HEK293 (cell line): ENCODE measurements at regions of chr1 and their contacts with region 1.

Region 1: DNA sequence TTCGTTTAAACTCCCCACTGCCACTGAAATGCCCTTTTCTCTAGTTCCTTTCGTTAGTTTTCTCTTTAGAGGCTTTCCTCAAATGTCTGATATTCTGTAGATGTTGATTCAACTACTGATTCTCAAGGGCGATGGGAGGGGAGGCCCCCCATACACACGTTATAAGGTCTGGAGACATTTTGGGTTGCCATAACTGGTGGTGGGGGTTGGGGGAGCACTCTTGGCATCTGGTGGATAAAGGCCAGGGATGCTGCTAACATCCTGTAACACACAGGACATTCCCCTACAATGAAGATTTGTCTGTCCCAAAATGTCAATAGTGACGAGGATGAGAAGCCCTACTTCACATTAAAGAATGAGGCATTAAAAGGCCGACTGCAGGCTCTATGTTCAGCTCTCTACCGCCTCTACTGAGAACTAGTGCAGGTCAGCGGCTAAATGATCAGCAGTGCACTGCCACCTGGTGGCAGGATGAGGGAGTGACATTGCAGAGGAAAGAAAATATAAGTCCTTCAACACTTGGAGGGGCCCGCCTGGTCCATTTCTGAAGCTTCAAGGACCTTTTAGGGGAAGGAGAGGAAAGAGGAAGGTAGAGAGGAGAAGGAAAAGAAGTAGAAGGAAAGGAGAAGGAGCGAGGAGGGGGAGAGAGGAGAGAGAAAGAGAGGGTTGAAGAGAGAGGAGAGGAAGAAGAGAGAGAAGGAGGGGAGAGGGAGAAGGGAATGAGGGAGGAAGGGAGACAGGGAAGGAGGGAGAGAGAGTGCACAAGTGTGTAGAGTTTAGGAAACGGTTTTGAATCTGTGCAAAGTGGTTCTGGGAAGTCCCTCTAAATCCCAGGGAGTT is 29.4 kb downstream of the ALG14 start:
- H3K4me3 ChIP-seq: no peak overlapping the region
- H3K27ac ChIP-seq: no peak overlapping the region
- H3K4me1 ChIP-seq: no peaks in the 10 kb centered on the region
- CTCF ChIP-seq: peak; percentile 99

Region 2: DNA sequence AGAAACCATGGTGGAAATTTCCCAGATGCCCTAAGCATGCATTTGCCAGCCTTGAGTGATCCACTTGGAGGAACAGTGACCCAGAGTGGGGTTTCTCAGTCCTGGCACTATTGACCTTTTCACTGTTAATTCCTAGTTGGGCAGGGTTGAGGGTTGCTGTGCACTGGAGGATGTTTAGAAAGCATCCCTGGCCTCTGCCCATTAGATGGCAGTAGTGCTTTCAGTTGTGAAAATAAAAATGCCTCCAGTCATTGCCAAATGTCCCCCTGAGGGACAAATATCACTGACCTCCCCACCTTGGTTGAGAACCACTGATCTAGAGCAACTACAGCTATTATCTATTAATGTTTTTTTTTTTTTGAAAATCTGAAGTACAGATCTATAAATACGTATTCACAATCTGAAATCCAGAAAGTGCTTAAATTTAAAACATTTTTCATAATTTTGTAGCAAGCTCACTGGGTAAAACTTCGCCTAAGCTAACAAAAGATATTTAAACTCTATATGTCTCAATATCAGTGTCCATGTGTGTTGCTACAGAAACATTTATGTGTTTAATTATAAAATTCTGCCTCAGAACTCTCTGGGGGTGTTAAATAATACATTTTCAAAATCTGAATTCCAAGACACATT is 529.1 kb before region 1 on chr1:
- CTCF ChIA-PET with region 1: interaction called, 11 read pairs
- POLR2A ChIA-PET with region 1: no interaction called
- H3K4me3 ChIP-seq: no peak overlapping the region
- H3K27ac ChIP-seq: no peak overlapping the region
- H3K4me1 ChIP-seq: no peaks in the 10 kb centered on the region
- CTCF ChIP-seq: no peak

Region 3: DNA sequence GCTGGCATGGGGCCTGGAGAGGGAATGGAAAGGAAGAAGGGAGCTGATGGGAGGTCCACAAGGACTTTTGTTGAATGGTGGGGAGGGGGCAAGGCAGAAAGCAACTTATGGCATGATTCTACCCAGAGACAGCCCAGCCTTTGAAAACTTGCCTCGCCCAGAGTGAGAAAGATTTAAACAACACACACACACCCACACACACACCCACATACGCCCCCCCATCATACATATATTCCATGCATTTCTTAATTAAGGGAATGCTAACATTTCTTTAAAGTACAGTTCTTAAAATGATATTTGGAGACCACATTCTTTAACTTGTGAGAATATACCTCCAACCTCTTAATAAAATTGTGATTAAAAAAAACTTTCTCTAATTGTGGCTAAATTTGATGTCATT is 386.4 kb before region 1 on chr1:
- CTCF ChIA-PET with region 1: no interaction called
- POLR2A ChIA-PET with region 1: no interaction called
- H3K4me3 ChIP-seq: no peak overlapping the region
- H3K27ac ChIP-seq: no peak overlapping the region
- H3K4me1 ChIP-seq: peaks cover 20% of the 10 kb centered on the region
- CTCF ChIP-seq: no peak

Region 4: GRCh38 chr1:94817712-94818111 is 225.6 kb before region 1 on chr1:
- CTCF ChIA-PET with region 1: interaction called, 16 read pairs
- POLR2A ChIA-PET with region 1: no interaction called
- H3K4me3 ChIP-seq: no peak overlapping the region
- H3K27ac ChIP-seq: no peak overlapping the region
- H3K4me1 ChIP-seq: no peaks in the 10 kb centered on the region; the same call in 1 of the 2 replicates
- CTCF ChIP-seq: no peak

Region 5: GRCh38 chr1:94863919-94864318 is 179.4 kb before region 1 on chr1:
- CTCF ChIA-PET with region 1: interaction called, 17 read pairs
- POLR2A ChIA-PET with region 1: no interaction called
- H3K4me3 ChIP-seq: no peak overlapping the region
- H3K27ac ChIP-seq: no peak overlapping the region
- H3K4me1 ChIP-seq: peaks cover 12% of the 10 kb centered on the region
- CTCF ChIP-seq: no peak

Region 6: DNA sequence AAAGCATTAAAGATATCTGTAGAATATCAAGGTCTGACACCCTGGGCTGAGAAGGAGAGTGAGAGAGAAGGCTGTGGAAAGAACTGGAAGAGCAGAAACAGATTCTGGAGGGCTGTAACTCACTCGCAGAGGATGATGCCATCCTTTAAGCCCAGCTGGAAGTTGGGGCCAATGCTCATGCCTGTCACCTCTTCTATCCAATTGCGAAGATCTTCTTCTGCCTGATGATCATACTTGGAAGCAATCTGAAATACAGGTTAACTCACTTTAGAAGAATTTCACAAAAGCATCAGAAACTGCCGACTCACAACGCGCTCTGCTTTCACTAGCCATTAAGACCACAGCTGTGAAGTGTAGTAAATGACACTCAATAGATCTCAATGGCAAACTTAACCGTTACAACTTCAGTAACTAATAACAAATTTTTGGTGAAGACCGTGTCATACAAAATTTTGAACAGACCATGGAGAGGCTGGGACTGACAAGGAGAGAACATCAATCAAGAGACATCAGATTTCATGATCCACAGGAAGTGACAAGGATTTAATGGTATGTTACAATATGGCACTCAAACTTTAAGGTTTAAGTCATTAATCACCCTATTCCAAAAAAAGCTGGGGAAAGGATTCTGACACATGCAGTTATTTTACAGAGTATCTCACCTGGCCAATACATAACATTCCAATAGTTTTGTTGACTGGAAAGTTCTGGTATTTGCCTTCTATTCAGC is 139.9 kb before region 1 on chr1:
- CTCF ChIA-PET with region 1: interaction called, 11 read pairs
- POLR2A ChIA-PET with region 1: no interaction called
- H3K4me3 ChIP-seq: no peak overlapping the region
- H3K27ac ChIP-seq: no peak overlapping the region
- H3K4me1 ChIP-seq: peaks cover 4% of the 10 kb centered on the region; the same call in 1 of the 2 replicates
- CTCF ChIP-seq: no peak

Region 7: DNA sequence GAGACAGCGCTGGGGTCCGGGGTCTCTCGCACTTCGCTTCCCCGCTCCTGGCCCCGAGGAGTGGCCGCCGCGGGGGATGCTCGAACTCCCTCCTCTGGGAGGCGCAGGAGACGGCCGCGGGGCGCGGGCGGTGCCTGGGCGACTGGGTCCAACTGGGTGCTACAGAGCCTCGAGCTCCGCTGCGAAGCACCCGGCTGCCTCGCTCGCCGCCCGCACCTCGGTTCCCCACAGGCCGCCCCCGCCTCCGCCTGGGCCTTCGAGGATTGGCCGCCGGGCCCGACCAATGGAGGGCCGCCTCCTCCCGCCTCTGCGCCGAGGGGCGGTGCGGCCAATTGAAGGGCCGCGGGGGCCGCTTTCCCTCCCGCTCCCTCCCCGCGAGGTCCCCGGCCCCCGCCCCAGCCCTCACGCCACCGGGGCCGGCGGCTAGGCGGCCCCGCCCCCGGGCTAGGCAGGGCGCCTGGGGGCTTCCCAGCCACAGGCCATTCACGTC is 116.4 kb before region 1 on chr1 and contains the start of gene CNN3:
- CTCF ChIA-PET with region 1: interaction called, 15 read pairs
- POLR2A ChIA-PET with region 1: interaction called, 4 read pairs
- H3K4me3 ChIP-seq: peak within 1 kb of the TSS; percentile 82
- H3K27ac ChIP-seq: peak within 1 kb of the TSS; percentile 97
- H3K4me1 ChIP-seq: peaks cover 27% of the 10 kb centered on the region
- CTCF ChIP-seq: no peak; the same call in 1 of the 2 replicates

Region 8: GRCh38 chr1:95067062-95067461 is 23.7 kb after region 1 on chr1:
- CTCF ChIA-PET with region 1: interaction called, 10 read pairs
- POLR2A ChIA-PET with region 1: no interaction called
- H3K4me3 ChIP-seq: no peak overlapping the region
- H3K27ac ChIP-seq: no peak overlapping the region
- H3K4me1 ChIP-seq: no peaks in the 10 kb centered on the region
- CTCF ChIP-seq: no peak

Region 9: DNA sequence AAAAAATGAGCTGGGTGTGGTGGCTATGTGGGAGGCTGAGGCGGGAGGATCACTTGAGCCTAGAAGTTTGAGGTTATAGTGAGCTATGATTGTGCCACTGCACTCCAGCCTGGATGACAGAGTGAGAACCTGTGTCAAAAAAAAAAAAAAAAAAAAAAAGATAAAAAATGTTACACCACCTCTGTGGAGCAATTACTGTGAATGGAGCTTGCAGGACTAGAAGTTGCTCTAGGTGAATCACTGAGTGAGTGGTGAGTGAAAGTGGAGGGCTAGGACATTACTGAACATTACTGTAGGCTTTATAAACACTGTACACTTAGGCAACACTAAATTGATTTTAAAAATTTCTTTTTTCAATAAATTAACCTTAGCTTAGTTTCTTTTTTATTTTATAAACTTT is 95.7 kb after region 1 on chr1:
- CTCF ChIA-PET with region 1: no interaction called
- POLR2A ChIA-PET with region 1: no interaction called
- H3K4me3 ChIP-seq: no peak overlapping the region
- H3K27ac ChIP-seq: no peak overlapping the region
- H3K4me1 ChIP-seq: no peaks in the 10 kb centered on the region
- CTCF ChIP-seq: no peak

Region 10: DNA sequence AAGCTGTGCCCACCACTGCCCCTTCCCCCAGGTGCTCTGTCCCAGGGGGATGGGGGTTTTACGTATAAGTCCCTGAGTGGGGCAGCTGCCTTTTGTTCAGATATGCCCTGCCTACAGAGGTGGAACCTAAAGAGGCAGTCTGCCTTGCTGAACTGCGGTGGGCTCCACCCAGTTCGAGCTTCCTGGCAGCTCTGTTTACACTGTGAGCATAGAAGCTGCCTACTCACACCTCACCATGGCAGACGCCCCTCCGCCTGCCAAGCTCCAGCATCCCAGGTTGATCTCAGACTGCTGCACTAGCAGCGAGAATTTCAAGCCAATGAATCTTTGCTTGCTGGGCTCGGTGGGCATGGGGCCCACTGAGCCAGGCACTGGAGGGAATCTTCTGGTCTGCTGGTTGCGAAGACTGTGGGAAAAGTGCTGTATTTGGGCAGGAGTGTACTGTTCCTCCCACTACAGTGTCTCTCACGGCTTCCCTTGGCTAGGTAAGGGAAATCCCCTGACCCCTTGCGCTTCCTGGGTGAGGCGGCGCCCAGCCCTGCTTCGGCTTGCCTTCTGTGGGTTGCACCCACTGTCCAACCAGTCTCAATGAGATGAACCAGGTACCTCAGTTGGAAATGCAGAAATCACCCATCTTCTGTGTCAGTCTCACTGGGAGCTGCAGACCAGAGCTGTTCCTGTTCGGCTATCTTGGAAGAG is 173.1 kb after region 1 on chr1:
- CTCF ChIA-PET with region 1: no interaction called
- POLR2A ChIA-PET with region 1: no interaction called
- H3K4me3 ChIP-seq: no peak overlapping the region
- H3K27ac ChIP-seq: no peak overlapping the region
- H3K4me1 ChIP-seq: no peaks in the 10 kb centered on the region
- CTCF ChIP-seq: no peak